ENCODE measurements at regions of chr11 and their contacts with region 1.

Region 1: GRCh38 chr11:3854977-3855807 is at the start of gene STIM1:
- DNase-seq: peak; percentile 95 to 99 (median 97)
- ATAC-seq: peak; percentile 73
- H3K4me3 ChIP-seq: peak within 1 kb of the TSS; percentile 79 to 98
- H3K4me3 Mint-ChIP-seq: peak within 1 kb of the TSS; percentile 93
- H3K27ac ChIP-seq: peak within 1 kb of the TSS; percentile 83 to 95
- H3K27ac Mint-ChIP-seq: peak within 1 kb of the TSS; percentile 99
- H3K4me1 ChIP-seq: peaks cover 61% of the 10 kb centered on the region
- H3K4me1 Mint-ChIP-seq: peaks cover 63% of the 10 kb centered on the region
- H3K27me3 ChIP-seq: no peaks in the 10 kb centered on the region
- H3K27me3 Mint-ChIP-seq: no peaks in the 10 kb centered on the region
- CTCF ChIP-seq: peak; percentile 87
- total RNA-seq, gene STIM1: 72.5 to 84.3 TPM

Region 2: DNA sequence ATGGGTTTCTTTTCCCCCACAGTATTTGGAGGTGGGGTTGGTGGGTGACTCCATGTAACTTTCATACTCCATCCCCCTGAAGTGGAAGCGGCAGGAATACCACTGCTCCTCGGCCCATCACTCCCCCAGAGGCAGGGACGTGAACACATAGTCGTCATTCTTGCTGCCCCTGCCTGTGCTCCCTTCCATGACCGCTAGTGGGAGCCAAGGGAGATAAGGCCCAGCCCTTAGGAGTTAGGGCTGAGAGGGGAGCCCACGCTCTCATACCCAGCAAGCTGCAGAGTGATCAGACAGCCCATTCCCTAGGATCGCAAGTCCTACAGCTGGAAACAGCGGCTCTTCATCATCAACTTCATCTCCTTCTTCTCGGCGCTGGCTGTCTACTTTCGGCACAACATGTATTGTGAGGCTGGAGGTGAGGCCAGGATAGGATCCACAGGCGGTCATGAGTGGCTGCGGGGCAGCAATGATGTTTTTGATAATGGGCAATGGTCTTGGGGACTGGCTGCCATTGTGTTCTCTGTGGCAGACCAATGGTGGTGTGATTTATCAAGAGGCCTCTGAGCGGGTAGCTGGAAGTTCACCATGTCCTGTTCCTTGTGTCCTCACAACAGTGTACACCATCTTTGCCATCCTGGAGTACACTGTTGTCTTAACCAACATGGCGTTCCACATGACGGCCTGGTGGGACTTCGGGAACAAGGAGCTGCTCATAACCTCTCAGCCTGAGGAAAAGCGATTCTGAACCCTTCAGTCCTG is 30.3 kb before region 1 on chr11:
- CTCF ChIA-PET with region 1: interaction called, 41 read pairs
- POLR2A ChIA-PET with region 1: interaction called, 10 read pairs
- intact Hi-C with region 1: no loop called
- DNase-seq: peak; percentile 67 to 90 (median 85)
- ATAC-seq: peak; percentile 99
- H3K4me3 ChIP-seq: no peak overlapping the region
- H3K4me3 Mint-ChIP-seq: peak overlapping the region; percentile 37
- H3K27ac ChIP-seq: peak overlapping the region in 1 of 2 experiments; percentile 56
- H3K27ac Mint-ChIP-seq: peak overlapping the region; percentile 89
- H3K4me1 ChIP-seq: peaks cover 10% of the 10 kb centered on the region
- H3K4me1 Mint-ChIP-seq: peaks cover 40% of the 10 kb centered on the region
- H3K27me3 ChIP-seq: no peaks in the 10 kb centered on the region
- H3K27me3 Mint-ChIP-seq: no peaks in the 10 kb centered on the region
- CTCF ChIP-seq: peak; percentile 68

Region 3: GRCh38 chr11:3873712-3874349 is 18.6 kb after region 1 on chr11:
- CTCF ChIA-PET with region 1: interaction called, 63 read pairs
- POLR2A ChIA-PET with region 1: interaction called, 38 read pairs
- intact Hi-C with region 1: loop called in 1 of 2 experiments (anchors 2 kb)
- DNase-seq: no peak
- ATAC-seq: no peak
- H3K4me3 ChIP-seq: no peak overlapping the region
- H3K4me3 Mint-ChIP-seq: no peak overlapping the region
- H3K27ac ChIP-seq: no peak overlapping the region
- H3K27ac Mint-ChIP-seq: peak overlapping the region; percentile 41
- H3K4me1 ChIP-seq: peaks cover 75% of the 10 kb centered on the region
- H3K4me1 Mint-ChIP-seq: peaks cover 85% of the 10 kb centered on the region
- H3K27me3 ChIP-seq: no peaks in the 10 kb centered on the region
- H3K27me3 Mint-ChIP-seq: no peaks in the 10 kb centered on the region
- CTCF ChIP-seq: no peak

Region 4: GRCh38 chr11:3905080-3905953 is 50.1 kb after region 1 on chr11:
- CTCF ChIA-PET with region 1: interaction called, 25 read pairs
- POLR2A ChIA-PET with region 1: interaction called, 8 read pairs
- intact Hi-C with region 1: loop called (anchors 2 to 5 kb)
- DNase-seq: peak; percentile 18 to 84 (median 68)
- ATAC-seq: peak; percentile 94
- H3K4me3 ChIP-seq: no peak overlapping the region
- H3K4me3 Mint-ChIP-seq: peak overlapping the region; percentile 16
- H3K27ac ChIP-seq: peak overlapping the region; percentile 26 to 51
- H3K27ac Mint-ChIP-seq: peak overlapping the region; percentile 89
- H3K4me1 ChIP-seq: peaks cover 77% of the 10 kb centered on the region
- H3K4me1 Mint-ChIP-seq: peaks cover 86% of the 10 kb centered on the region
- H3K27me3 ChIP-seq: no peaks in the 10 kb centered on the region
- H3K27me3 Mint-ChIP-seq: no peaks in the 10 kb centered on the region
- CTCF ChIP-seq: no peak

Region 5: DNA sequence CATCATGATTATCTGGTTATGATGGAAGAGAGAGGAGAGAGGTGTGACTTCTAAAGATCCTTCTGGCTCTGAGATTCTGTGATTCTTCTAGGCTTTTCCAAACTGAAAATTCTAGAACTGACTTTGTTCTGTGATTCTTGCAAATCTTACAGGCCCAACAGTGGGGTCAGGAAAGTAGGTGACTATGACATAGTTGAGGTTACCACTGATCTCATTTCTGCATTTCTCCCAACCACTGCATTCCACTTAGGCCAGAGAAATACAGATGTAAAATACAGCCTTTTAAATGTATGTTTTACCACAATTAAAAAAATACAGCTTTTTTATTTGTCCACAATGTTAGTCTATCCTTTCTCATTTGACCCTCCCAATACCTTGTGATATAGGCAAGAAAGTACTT is 84.0 kb after region 1 on chr11:
- CTCF ChIA-PET with region 1: interaction called, 36 read pairs
- POLR2A ChIA-PET with region 1: interaction called, 24 read pairs
- intact Hi-C with region 1: no loop called
- DNase-seq: no peak
- ATAC-seq: peak; percentile 26
- H3K4me3 ChIP-seq: no peak overlapping the region
- H3K4me3 Mint-ChIP-seq: no peak overlapping the region
- H3K27ac ChIP-seq: no peak overlapping the region
- H3K27ac Mint-ChIP-seq: peak overlapping the region; percentile 78
- H3K4me1 ChIP-seq: peaks cover 61% of the 10 kb centered on the region
- H3K4me1 Mint-ChIP-seq: peaks cover 92% of the 10 kb centered on the region
- H3K27me3 ChIP-seq: no peaks in the 10 kb centered on the region
- H3K27me3 Mint-ChIP-seq: no peaks in the 10 kb centered on the region
- CTCF ChIP-seq: no peak

Region 6: DNA sequence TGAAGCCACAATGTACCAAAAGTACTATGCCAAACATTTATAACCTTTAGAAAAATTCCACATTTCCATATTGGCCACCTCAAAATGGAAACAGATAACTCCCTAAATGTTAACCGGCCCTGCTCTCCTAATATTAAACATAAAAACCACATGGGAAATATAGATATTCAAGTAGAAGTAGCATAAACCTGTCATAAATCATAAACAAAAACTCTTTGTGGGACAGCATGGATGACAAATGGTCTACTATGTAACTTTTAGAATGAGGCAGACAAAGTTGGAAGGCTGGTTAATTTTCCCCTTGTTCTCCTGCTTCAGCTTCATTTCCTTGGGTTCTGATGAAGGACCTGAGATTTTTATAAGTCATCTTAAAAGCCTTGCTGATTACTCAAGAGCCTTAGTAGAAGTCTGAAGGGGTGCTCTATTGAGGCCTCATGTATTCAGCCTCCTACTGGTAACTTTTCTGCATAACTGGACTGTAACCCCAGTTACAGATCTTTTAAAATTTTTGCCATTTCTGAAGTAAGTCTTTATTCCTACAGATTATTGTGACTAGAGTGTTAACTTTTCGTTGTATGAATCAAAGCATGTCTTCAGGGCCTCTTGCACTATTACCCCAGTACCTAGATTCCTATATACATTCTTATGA is 116.7 kb after region 1 on chr11:
- CTCF ChIA-PET with region 1: interaction called, 16 read pairs
- POLR2A ChIA-PET with region 1: interaction called, 5 read pairs
- intact Hi-C with region 1: no loop called
- DNase-seq: peak in 2 of 9 experiments; percentile 14 to 42
- ATAC-seq: peak; percentile 52
- H3K4me3 ChIP-seq: no peak overlapping the region
- H3K4me3 Mint-ChIP-seq: no peak overlapping the region
- H3K27ac ChIP-seq: no peak overlapping the region
- H3K27ac Mint-ChIP-seq: peak overlapping the region; percentile 7
- H3K4me1 ChIP-seq: peaks cover 39% of the 10 kb centered on the region
- H3K4me1 Mint-ChIP-seq: peaks cover 70% of the 10 kb centered on the region
- H3K27me3 ChIP-seq: no peaks in the 10 kb centered on the region
- H3K27me3 Mint-ChIP-seq: no peaks in the 10 kb centered on the region
- CTCF ChIP-seq: no peak

Region 7: GRCh38 chr11:4065601-4066377 is 210.6 kb after region 1 on chr11:
- CTCF ChIA-PET with region 1: interaction called, 548 read pairs
- POLR2A ChIA-PET with region 1: interaction called, 19 read pairs
- intact Hi-C with region 1: no loop called
- DNase-seq: no peak
- ATAC-seq: no peak
- H3K4me3 ChIP-seq: no peak overlapping the region
- H3K4me3 Mint-ChIP-seq: no peak overlapping the region
- H3K27ac ChIP-seq: peak overlapping the region in 1 of 2 experiments; percentile 32
- H3K27ac Mint-ChIP-seq: peak overlapping the region; percentile 84
- H3K4me1 ChIP-seq: peaks cover 53% of the 10 kb centered on the region
- H3K4me1 Mint-ChIP-seq: peaks cover 64% of the 10 kb centered on the region
- H3K27me3 ChIP-seq: no peaks in the 10 kb centered on the region
- H3K27me3 Mint-ChIP-seq: no peaks in the 10 kb centered on the region
- CTCF ChIP-seq: no peak